Activated T-helper 1 cell treated with anti-CD3 and anti-CD28 coated beads, Interleukin-12 subunit alpha, Interleukin-12 subunit beta, Interleukin-2, Interleukin-4 antibody, amounts not matched to agents 30 ng/mL and 10 ng/mL and 1 ng/mL, durations not matched to agents 14 hours and 24 hours and 36 hours (primary cell): ENCODE measurements at regions of chr12 and their contacts with region 1.

Region 1: GRCh38 chr12:99619389-99620158 is 28.0 kb upstream of the GARIN6 start:
- DNase-seq: no peak
- H3K4me3 Mint-ChIP-seq: no peak overlapping the region
- H3K27ac Mint-ChIP-seq: no peak overlapping the region
- H3K4me1 Mint-ChIP-seq: no peaks in the 10 kb centered on the region
- H3K27me3 Mint-ChIP-seq: no peaks in the 10 kb centered on the region

Region 2: GRCh38 chr12:99386907-99387306 is 232.7 kb before region 1 on chr12:
- intact Hi-C with region 1: loop called (anchors 10 kb)
- DNase-seq: no peak
- H3K4me3 Mint-ChIP-seq: no peak overlapping the region
- H3K27ac Mint-ChIP-seq: no peak overlapping the region
- H3K4me1 Mint-ChIP-seq: no peaks in the 10 kb centered on the region
- H3K27me3 Mint-ChIP-seq: no peaks in the 10 kb centered on the region

Region 3: GRCh38 chr12:99598785-99599184 is 20.8 kb before region 1 on chr12:
- intact Hi-C with region 1: no loop called
- DNase-seq: no peak
- H3K4me3 Mint-ChIP-seq: no peak overlapping the region
- H3K27ac Mint-ChIP-seq: no peak overlapping the region
- H3K4me1 Mint-ChIP-seq: no peaks in the 10 kb centered on the region
- H3K27me3 Mint-ChIP-seq: no peaks in the 10 kb centered on the region